ENCODE measurements at regions of chr10 and their contacts with region 1.

Region 1: GRCh38 chr10:80144067-80144695 is 11.7 kb downstream of the PLAC9 start:
- DNase-seq: no peak
- H3K4me3 ChIP-seq: peak overlapping the region in 2 of 3 donors; percentile 30 to 44
- H3K27ac ChIP-seq: peak overlapping the region; percentile 33 to 58
- H3K4me1 ChIP-seq: peaks cover 0 to 11% of the 10 kb centered on the region in 2 donors
- H3K27me3 ChIP-seq: no peaks in the 10 kb centered on the region
- CTCF ChIP-seq: peak in 1 of 3 donors; percentile 15
- POLR2A ChIP-seq: no peak

Region 2: DNA sequence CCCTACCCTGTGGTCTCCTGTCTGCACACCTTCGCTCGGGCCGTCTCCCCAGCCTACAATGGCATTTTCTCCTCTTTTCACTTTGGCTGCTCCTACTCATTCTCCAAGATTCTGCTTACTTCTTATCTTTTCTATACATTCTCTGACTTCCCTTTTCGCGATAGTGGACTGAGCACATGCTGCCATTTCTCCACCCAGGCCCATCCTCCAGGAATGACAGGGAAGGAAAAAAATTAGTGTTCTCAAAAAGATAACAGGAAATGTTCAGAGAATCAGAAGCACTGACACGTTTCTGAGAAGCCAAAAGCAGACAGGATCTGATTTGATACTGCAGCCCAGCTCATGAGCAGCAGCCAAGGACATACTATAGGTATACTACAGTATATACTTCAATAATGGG is 67.6 kb after region 1 on chr10:
- intact Hi-C with region 1: loop called (anchors 5 kb)
- DNase-seq: no peak
- H3K4me3 ChIP-seq: no peak overlapping the region
- H3K27ac ChIP-seq: no peak overlapping the region
- H3K4me1 ChIP-seq: no peaks in the 10 kb centered on the region
- H3K27me3 ChIP-seq: no peaks in the 10 kb centered on the region
- CTCF ChIP-seq: no peak
- POLR2A ChIP-seq: no peak

Measured in breast epithelium (tissue), 4 donors.